ENCODE measurements at regions of chr1 and their contacts with region 1.

Region 1: DNA sequence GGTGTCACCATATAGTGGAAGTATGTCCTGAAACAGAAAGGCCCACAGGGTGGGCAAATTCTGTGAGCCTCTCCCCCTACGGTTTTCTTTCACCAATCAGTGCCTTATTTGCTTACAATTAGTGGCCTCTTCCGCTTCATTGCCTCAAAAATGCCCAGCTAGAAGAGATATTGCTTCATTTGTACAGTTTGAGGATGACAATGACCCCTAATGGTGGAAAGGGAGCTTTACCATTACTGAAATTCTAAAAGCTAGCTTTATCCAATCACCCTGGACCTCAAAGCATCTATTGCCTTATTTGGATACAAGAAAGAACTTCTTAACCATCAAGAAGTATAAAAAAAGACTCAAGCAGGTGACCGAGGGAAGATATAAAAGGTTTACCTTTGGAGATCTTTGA is 49.6 kb downstream of the LRRC71 start:
- DNase-seq: no peak
- H3K4me3 Mint-ChIP-seq: no peak overlapping the region
- H3K27ac Mint-ChIP-seq: no peak overlapping the region
- H3K4me1 Mint-ChIP-seq: no peaks in the 10 kb centered on the region
- H3K27me3 Mint-ChIP-seq: no peaks in the 10 kb centered on the region
- CTCF ChIP-seq: no peak

Region 2: GRCh38 chr1:156980551-156980950 is 10.5 kb after region 1 on chr1:
- CTCF ChIA-PET with region 1: interaction called, 10 read pairs
- POLR2A ChIA-PET with region 1: interaction called, 4 read pairs
- intact Hi-C with region 1: no loop called
- DNase-seq: no peak
- H3K4me3 Mint-ChIP-seq: no peak overlapping the region
- H3K27ac Mint-ChIP-seq: no peak overlapping the region
- H3K4me1 Mint-ChIP-seq: no peaks in the 10 kb centered on the region
- H3K27me3 Mint-ChIP-seq: no peaks in the 10 kb centered on the region
- CTCF ChIP-seq: no peak

Region 3: GRCh38 chr1:157262422-157262821 is 292.4 kb after region 1 on chr1:
- CTCF ChIA-PET with region 1: no interaction called
- POLR2A ChIA-PET with region 1: no interaction called
- intact Hi-C with region 1: no loop called
- DNase-seq: no peak
- H3K4me3 Mint-ChIP-seq: no peak overlapping the region
- H3K27ac Mint-ChIP-seq: no peak overlapping the region
- H3K4me1 Mint-ChIP-seq: no peaks in the 10 kb centered on the region
- H3K27me3 Mint-ChIP-seq: peaks cover 31% of the 10 kb centered on the region
- CTCF ChIP-seq: no peak